Upper lobe of right lung (tissue), 1 donor: ENCODE measurements at regions of chr12 and their contacts with region 1.

Region 1: DNA sequence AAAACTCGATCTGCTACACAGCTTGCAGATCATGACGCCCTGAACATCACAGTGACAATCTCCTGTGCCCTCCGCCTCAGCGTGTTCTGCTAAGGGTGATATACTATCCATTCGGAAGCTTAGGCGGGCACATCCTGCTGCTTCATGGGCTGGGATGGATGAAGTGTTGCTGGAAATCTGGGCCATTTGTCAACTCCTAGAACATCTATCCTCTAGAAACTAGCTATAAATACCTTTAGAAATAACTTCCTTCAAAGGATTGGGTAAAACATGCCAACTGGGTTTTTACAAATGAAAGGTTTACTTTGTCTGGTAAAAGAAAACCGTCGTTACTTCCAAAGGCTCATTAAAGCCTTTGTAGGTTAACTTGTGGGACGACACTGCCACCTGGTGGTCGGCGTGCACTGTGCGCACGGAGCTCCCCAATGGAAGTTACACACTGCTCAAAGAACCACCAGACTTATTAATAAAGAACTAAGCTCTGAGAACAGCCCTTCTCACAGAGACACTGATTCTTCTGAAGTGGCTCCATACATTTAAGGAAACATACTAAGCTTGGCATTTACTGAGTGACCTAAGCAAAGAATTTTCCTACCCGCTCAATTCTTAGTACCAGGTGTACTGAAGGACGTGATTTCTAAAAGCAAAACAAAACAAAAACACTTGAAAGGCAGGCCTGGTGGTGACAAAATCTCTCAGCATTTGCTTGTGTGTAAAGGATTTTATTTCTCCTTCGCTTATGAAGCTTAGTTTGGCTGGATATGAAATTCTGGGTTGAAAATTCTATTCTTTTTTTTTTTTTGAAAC is 21.6 kb upstream of the CACNA2D4 start:
- DNase-seq: peak; percentile 92
- ATAC-seq: peak; percentile 89
- H3K4me3 ChIP-seq: no peak overlapping the region
- H3K27ac ChIP-seq: no peak overlapping the region
- H3K4me1 ChIP-seq: peaks cover 7% of the 10 kb centered on the region
- H3K27me3 ChIP-seq: no peaks in the 10 kb centered on the region
- CTCF ChIP-seq: peak; percentile 97

Region 2: GRCh38 chr12:1634590-1635191 is 305.3 kb before region 1 on chr12:
- intact Hi-C with region 1: loop called (anchors 10 kb)
- DNase-seq: peak; percentile 88
- ATAC-seq: peak; percentile 83
- H3K4me3 ChIP-seq: no peak overlapping the region
- H3K27ac ChIP-seq: no peak overlapping the region
- H3K4me1 ChIP-seq: peaks cover 12% of the 10 kb centered on the region
- H3K27me3 ChIP-seq: peaks cover 7% of the 10 kb centered on the region
- CTCF ChIP-seq: peak; percentile 84

Region 3: DNA sequence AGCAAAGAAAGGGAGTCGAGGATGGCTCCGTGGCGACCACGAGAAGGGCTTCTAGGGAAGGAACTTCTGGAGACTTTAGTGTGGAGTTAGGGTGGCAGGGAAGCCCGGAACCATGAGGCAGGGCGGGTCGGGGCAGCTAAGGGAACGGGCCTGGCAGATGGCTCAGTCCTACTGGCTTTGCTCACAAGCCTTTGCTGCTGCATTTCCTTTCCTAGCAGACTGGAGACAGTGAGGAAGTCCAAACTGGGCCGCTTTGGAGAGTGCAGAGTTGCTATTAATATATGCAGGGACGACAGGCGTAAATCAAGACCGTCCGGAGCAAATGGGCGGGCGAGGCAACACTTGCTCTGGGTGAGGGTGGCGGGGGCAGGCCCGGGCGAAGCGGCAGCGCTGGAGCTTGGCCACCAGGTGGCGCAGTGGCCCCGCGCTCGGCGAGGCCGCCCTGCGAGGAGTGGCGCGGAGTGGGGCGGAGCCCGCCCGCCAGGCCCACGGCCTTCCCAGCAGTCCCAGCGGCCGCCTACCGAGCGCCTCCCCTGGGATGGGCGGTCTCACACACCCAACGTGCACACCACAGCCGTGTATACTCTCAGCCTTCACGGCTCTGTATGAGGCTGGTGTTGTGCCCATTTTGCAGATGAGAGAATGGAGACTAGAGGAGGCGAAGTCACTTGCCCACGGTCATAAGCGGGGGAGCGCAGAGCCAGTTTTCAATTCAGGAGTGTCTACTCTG is 144.1 kb before region 1 on chr12:
- intact Hi-C with region 1: loop called (anchors 5 kb)
- DNase-seq: peak; percentile 97
- ATAC-seq: peak; percentile 94
- H3K4me3 ChIP-seq: peak overlapping the region; percentile 85
- H3K27ac ChIP-seq: peak overlapping the region; percentile 93
- H3K4me1 ChIP-seq: peaks cover 11% of the 10 kb centered on the region
- H3K27me3 ChIP-seq: no peaks in the 10 kb centered on the region
- CTCF ChIP-seq: peak; percentile 97

Region 4: DNA sequence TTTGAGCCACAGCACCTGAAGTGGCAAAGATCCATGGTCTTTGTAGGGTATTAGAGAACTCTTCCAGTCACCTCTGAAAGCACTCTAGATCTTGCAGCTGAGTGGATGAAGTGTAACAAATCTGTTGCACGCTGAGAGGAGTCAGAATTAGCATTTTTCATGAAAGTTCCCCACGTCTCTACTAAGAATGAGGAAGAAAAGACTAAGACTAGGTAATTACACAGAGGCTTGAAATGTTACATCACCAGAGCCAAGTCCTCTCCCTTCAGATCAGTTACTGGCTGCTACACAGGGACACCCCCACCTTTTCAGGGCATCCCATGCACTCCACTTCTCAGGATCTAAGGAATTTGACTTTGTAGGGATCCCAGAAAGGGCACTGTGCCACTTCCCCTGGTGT is 756.1 kb after region 1 on chr12:
- intact Hi-C with region 1: no loop called
- DNase-seq: no peak
- ATAC-seq: no peak
- H3K4me3 ChIP-seq: no peak overlapping the region
- H3K27ac ChIP-seq: no peak overlapping the region
- H3K4me1 ChIP-seq: no peaks in the 10 kb centered on the region
- H3K27me3 ChIP-seq: peaks cover 10% of the 10 kb centered on the region
- CTCF ChIP-seq: no peak